ENCODE measurements at regions of chr2 and their contacts with region 1.

Region 1: GRCh38 chr2:55302241-55302640 is 33.2 kb upstream of the MTIF2 start:
- DNase-seq: no peak
- H3K4me3 ChIP-seq: no peak overlapping the region
- H3K27ac ChIP-seq: no peak overlapping the region
- H3K4me1 ChIP-seq: no peaks in the 10 kb centered on the region
- H3K27me3 ChIP-seq: no peaks in the 10 kb centered on the region
- CTCF ChIP-seq: no peak

Region 2: GRCh38 chr2:55268907-55269644 is 33.2 kb before region 1 on chr2 and contains the start of gene MTIF2:
- CTCF ChIA-PET with region 1: no interaction called
- dilution Hi-C with region 1: no loop called
- in situ Hi-C with region 1: no loop called
- intact Hi-C with region 1: no loop called
- DNase-seq: peak; percentile 92
- H3K4me3 ChIP-seq: peak within 1 kb of the TSS; percentile 60 to 98 (median 61)
- H3K27ac ChIP-seq: peak within 1 kb of the TSS; percentile 78
- H3K4me1 ChIP-seq: peaks cover 5% of the 10 kb centered on the region
- H3K27me3 ChIP-seq: no peaks in the 10 kb centered on the region
- CTCF ChIP-seq: peak in 1 of 2 donors; percentile 18
- total RNA-seq, gene MTIF2: 24.0 to 39.5 TPM

Region 3: DNA sequence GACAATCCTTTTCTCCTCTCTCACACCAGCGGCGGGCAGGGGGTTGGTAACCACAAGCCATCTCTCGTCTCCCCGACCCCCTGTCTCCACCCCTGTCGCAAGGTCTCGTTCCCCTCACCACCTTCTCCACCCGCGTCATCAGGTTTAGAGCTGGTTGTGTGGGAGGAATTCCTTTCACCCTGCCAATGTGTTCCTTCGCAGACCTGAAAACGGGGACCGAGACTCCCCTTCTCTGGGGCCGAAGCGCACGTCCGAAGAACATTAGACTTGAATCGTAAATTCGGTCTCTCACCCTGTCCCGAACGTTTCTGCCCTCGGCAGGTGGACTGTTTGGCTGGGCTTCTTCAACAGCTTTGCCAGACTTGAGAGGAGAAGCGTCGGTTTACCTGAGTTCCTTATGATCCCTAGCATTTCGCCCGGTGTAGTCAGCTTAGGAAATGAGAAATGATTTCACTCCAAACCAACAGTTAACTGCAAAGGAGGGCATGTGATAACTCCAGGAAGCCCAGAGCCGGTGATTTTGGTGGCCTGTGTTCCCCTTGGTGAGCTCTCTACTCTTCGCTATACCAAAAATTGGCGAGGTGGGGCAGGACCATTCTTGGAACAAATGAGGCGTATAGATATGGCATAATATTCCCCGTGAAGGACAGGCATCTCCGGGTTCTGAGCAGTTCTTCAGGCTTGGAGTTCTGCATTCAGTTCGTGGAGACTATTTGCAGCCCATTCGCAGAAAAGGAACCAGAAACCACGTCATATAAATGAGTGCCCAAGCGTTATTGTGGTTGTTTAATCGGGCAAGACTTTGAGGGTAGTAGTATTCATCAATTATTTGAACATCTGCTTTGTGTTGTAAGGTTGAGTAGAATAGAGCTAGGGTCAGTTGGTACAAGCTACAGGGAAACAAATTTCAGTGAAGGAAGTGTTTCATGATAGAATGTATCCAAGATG is 218.0 kb after region 1 on chr2:
- CTCF ChIA-PET with region 1: interaction called, 13 read pairs
- dilution Hi-C with region 1: no loop called
- in situ Hi-C with region 1: no loop called
- intact Hi-C with region 1: no loop called
- DNase-seq: peak; percentile 46
- H3K4me3 ChIP-seq: peak overlapping the region; percentile 83 to 94 (median 85)
- H3K27ac ChIP-seq: peak overlapping the region; percentile 86
- H3K4me1 ChIP-seq: peaks cover 7% of the 10 kb centered on the region
- H3K27me3 ChIP-seq: no peaks in the 10 kb centered on the region
- CTCF ChIP-seq: no peak